Adrenal gland (tissue), 19 donors: ENCODE measurements at regions of chr2 and their contacts with region 1.

Region 1: GRCh38 chr2:164737612-164738081 is 104.0 kb downstream of the COBLL1 start:
- DNase-seq: peak; percentile 57 to 82 (median 70)
- H3K4me3 ChIP-seq: no peak overlapping the region
- H3K27ac ChIP-seq: peak overlapping the region in 2 of 5 donors; percentile 38 to 44
- H3K4me1 ChIP-seq: peaks cover 44 to 48% of the 10 kb centered on the region in 2 donors
- H3K27me3 ChIP-seq: no peaks in the 10 kb centered on the region
- CTCF ChIP-seq: peak; percentile 69 to 85 (median 75)
- POLR2A ChIP-seq: no peak

Region 2: GRCh38 chr2:164841719-164842623 is 104.3 kb after region 1 on chr2 and contains the start of gene COBLL1:
- intact Hi-C with region 1: loop called in 1 of 2 experiments (anchors 10 kb)
- DNase-seq: peak; percentile 78 to 89 (median 86)
- H3K4me3 ChIP-seq: peak within 1 kb of the TSS; percentile 78 to 98 (median 94)
- H3K27ac ChIP-seq: peak within 1 kb of the TSS; percentile 91 to 98 (median 95)
- H3K4me1 ChIP-seq: peaks cover 14 to 28% of the 10 kb centered on the region in 2 donors
- H3K27me3 ChIP-seq: no peaks in the 10 kb centered on the region
- CTCF ChIP-seq: peak; percentile 75 to 91 (median 89)
- POLR2A ChIP-seq: peak; percentile 31 to 76
- total RNA-seq, gene COBLL1: 50.1 to 365 (median 233) TPM